OCI-LY7 (cell line): ENCODE measurements at regions of chr1 and their contacts with region 1.

Region 1: DNA sequence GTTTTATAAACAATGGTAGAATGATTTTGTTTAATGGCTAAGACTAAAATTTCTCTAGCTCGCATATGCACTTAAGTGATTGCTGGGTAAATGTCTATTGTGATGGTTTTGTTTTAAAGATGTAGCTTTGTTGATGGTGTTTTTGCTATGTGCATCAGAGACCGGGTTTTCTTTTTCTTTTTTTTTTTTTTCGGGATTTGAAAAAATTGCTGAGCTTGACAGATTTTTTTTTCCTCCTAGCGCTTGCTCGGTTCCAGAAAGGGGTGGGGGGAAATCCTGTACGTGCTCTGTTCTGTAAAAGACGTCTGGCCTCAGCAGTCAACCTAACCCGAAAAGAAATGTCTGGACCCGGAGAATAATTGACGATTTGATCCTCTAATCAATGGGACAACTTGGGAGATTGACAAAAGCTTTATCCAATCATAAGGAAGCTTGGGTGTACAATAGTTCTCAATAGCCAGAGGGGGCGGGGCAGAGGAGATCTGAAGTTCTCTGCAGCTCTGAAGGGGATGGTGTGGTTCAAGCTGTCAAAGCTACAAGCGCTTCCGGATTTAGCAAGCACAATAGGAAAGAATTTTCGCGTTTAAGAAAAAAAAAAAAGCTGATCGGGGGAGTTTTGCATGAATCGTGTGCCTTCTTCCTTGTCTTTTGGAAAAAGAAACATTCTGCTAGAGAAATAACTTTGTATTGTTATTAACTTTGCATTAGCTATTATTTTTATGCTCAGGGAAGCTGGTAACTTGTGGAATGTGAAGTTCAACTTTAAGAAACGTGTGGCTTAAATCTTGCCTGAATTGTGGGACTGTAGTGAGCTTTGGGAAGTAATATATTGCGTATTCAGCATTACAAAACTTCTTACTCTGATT is 4.5 kb upstream of the NFIA start:
- DNase-seq: peak; percentile 100
- H3K4me3 ChIP-seq: peak overlapping the region; percentile 74
- H3K27ac ChIP-seq: peak overlapping the region; percentile 91
- H3K4me1 ChIP-seq: peaks cover 45% of the 10 kb centered on the region
- CTCF ChIP-seq: 0 out of 2 replicates have a peak, but pooled peaks have one; percentile 8

Region 2: DNA sequence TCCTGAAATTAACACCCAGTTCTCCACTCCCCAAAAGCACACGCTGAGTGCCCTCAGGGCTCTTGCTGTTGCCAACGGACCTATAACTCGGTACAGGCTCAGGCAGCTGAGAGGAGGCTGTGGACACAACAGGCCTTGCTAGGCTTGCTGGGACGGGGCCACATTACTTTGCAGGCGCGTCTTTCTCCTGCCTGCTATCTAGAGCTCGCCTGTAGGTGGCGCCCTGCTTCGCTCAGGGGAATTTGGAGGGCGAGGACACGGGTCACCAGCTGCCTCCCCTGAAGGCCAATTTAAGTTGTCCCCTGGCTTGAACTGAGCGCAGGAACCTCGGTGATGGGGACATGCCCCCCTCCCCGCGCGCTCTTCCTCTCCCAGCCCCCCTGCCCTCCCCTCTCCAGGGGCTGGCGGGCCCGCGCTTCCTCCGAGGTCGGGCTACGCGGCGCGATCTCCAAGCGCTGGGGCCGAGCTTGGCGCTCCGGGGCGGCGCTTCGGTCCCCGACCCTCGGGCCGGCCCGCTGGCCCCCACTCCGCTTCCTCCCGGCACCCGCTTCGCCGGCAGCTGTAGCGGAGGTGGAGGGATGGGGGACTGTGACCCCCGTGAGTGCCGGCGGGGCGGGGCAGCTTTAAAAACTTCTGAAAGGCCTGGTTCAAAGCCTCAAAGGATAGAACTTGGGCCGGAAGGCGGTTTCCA is 27.9 kb before region 1 on chr1:
- CTCF ChIA-PET with region 1: interaction called, 15 read pairs
- POLR2A ChIA-PET with region 1: interaction called, 12 read pairs
- intact Hi-C with region 1: no loop called
- DNase-seq: peak; percentile 81
- H3K4me3 ChIP-seq: peak overlapping the region; percentile 71
- H3K27ac ChIP-seq: no peak overlapping the region
- H3K4me1 ChIP-seq: peaks cover 10% of the 10 kb centered on the region
- CTCF ChIP-seq: peak; percentile 94

Region 3: DNA sequence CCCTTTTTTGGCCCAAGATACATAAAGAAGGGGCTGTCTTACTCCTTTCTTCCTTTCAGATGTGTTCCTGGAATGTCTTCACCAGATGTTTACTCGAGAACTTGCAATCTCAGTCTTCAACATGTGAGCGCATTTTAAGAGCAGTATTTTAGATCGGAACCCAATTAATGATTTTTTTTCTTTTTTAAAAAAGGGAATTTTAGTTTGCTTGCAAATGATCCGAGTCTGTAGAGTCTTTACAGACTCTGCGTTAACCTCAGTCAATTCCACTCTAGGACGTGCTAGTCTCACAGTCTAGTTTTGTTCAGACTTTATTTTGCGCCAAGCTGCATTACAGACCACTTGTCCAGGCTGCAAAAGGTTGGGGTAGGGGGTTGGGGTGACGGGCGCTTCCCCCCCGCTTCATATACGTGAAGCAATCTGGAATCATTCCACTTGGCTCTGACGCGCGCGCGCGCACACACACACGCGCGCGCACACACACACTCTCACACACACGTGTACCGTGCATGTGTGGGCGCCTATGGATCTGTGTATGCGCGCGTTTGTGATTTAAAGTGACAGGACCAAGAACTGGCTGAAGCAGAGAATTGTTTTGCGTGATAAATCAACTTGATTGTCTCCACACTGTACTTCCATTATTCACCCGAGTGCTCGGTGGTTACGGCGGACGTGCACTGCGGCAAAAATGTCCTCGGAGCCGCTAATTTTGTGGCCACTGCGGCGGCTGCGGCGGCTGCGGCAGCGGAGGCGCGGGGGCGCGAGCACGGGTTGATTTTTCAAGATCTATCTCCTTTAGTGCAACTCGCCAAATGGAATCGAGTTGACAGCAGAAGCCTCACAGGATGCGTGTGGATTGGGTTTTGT is 21.1 kb before region 1 on chr1:
- CTCF ChIA-PET with region 1: interaction called, 15 read pairs
- POLR2A ChIA-PET with region 1: interaction called, 11 read pairs
- intact Hi-C with region 1: loop called (anchors 2 kb)
- DNase-seq: peak; percentile 43
- H3K4me3 ChIP-seq: peak overlapping the region; percentile 72
- H3K27ac ChIP-seq: no peak overlapping the region
- H3K4me1 ChIP-seq: peaks cover 13% of the 10 kb centered on the region
- CTCF ChIP-seq: no peak

Region 4: DNA sequence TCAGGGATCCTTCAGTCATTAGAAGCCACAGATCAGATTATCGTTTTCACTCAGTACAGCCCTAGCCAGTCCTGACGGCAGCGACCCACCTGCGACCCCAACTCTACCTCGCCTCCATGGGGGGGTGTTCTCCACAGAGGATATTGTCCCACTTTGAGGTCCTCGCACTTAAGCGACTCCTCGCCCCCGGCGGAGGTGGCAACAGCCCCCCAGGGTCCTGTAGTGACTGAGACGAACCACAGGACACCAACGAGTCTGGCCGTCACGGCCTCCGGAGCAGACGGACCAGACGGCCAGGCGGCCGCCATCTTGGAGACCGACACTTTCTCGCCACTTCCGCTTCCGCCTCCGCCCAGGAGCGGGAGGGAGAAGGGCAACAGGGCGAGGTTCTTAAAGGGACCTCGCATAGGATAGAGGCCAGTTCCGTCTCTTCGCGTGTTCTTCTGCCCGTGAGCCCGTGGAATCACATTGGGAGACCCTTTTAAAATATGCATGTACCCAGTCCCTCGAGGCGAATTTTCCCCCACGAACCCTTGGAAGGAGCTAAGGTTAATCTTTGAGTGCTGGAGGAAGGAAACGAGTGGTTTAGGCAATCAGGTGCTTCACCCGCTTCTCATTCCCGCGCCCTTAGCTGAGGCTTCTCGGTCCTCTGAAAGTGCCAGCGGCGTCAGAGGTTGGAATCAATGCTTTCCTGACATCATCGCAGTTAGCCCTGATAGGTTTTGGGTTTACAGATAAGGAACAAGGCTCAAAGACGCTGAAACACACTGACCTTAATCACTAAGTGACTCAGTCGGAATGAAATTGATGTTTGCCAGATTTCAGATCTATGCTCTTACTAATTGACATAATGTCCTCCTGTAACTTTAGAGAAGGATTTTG is 647.1 kb after region 1 on chr1 and contains the start of gene TM2D1:
- CTCF ChIA-PET with region 1: no interaction called
- POLR2A ChIA-PET with region 1: no interaction called
- intact Hi-C with region 1: loop called (anchors 2 kb)
- DNase-seq: peak; percentile 91
- H3K4me3 ChIP-seq: peak within 1 kb of the TSS; percentile 87
- H3K27ac ChIP-seq: peak within 1 kb of the TSS; percentile 52
- H3K4me1 ChIP-seq: peaks cover 24% of the 10 kb centered on the region
- CTCF ChIP-seq: no peak
- total RNA-seq, gene TM2D1: 40.8 and 44.9 TPM in 2 replicates

Region 5: GRCh38 chr1:62687903-62688686 is 1610.2 kb after region 1 on chr1 and contains the start of gene DOCK7:
- CTCF ChIA-PET with region 1: no interaction called
- POLR2A ChIA-PET with region 1: no interaction called
- intact Hi-C with region 1: loop called (anchors 10 kb)
- DNase-seq: peak; percentile 73
- H3K4me3 ChIP-seq: peak within 1 kb of the TSS; percentile 72
- H3K27ac ChIP-seq: peak within 1 kb of the TSS; percentile 14
- H3K4me1 ChIP-seq: peaks cover 15% of the 10 kb centered on the region
- CTCF ChIP-seq: no peak
- total RNA-seq, gene DOCK7: 20.3 and 30.7 TPM in 2 replicates